HepG2 (cell line): ENCODE measurements at regions of chr4 and their contacts with region 1.

Region 1: DNA sequence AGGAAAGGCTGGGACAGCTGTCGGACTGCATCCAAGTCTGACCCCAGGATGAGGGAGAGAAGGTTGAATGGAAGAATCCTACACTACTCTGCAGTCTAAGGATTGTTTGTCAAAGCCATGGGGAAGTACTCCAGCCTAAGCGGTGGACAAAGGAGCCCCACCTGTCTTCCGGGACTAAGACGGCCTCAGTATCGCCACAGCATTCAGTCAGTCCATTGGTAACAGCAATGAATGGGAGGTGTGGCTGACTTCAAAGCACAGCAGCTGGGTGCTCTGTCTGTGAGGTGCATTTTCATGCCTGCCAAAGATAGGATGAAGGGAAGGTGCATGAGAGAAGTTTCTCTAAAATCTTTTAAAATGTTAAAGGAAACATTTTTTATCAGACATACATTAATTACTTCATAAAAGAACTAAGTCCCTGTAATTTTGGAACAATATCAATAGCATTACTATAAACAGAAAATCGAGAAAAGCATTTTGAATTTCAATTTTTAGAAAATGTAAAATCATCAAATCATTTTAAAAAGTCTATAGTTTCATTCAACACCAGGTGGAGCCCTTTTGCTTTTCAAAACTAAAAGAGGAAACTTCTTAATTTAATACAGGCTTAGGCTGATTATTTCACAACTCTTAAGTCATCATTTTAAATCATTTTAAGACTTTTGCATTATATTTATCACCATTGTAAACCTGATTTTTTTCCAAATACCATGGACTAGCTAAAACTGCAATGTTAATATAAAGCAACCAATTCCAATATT is 27.6 kb upstream of the INTU start:
- DNase-seq: peak; percentile 29
- ATAC-seq: peak; percentile 64
- H3K4me3 ChIP-seq: no peak overlapping the region
- H3K27ac ChIP-seq: no peak overlapping the region
- H3K4me1 ChIP-seq: peaks cover 6% of the 10 kb centered on the region; the same call in 1 of the 2 replicates
- H3K27me3 ChIP-seq: no peaks in the 10 kb centered on the region
- CTCF ChIP-seq: no peak; the same call in none of the 2 replicates
- EP300 ChIP-seq: no peak
- POLR2A ChIP-seq: no peak
- RAD21 ChIP-seq: no peak

Region 2: DNA sequence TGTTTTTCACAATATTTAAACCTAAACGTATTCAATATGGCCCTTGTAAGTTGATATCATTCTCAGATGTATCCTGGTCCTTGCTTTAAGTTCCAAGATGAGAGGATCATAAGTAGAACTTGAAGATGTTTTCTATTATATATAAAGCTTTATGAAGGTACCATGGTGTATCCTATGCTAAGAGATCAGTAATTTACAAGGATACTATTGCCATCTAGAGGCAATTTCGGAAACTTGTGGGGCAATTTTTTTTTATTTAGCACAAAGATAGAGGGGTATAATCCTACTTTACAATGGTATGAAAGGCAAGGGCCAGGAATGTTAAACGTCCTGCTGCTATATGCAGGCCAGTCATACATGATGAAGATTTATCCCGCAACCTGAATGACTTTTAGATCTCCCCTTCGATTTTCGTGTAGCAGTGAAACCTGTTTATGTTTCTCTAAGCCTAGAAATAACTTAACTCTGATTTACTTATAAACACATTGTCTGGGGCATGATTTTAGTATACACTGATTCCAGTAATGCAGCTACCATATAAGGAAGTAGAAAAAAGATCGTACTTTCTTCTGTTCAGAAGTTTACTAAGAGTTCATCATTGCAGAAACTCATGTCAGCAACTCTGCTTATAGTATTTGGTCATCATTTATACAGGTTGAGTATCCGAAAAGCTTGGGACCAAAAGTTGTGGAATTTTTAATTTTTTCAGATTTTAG is 127.6 kb after region 1 on chr4:
- CTCF ChIA-PET with region 1: interaction called, 43 read pairs
- POLR2A ChIA-PET with region 1: no interaction called
- in situ Hi-C with region 1: loop called (anchors 5 kb)
- intact Hi-C with region 1: loop called (anchors 1 kb)
- DNase-seq: peak; percentile 35
- ATAC-seq: peak; percentile 82
- H3K4me3 ChIP-seq: no peak overlapping the region
- H3K27ac ChIP-seq: no peak overlapping the region
- H3K4me1 ChIP-seq: no peaks in the 10 kb centered on the region
- H3K27me3 ChIP-seq: no peaks in the 10 kb centered on the region; a peak in 1 of 5 replicates
- CTCF ChIP-seq: peak; percentile 54
- EP300 ChIP-seq: no peak
- POLR2A ChIP-seq: no peak
- RAD21 ChIP-seq: no peak

Region 3: DNA sequence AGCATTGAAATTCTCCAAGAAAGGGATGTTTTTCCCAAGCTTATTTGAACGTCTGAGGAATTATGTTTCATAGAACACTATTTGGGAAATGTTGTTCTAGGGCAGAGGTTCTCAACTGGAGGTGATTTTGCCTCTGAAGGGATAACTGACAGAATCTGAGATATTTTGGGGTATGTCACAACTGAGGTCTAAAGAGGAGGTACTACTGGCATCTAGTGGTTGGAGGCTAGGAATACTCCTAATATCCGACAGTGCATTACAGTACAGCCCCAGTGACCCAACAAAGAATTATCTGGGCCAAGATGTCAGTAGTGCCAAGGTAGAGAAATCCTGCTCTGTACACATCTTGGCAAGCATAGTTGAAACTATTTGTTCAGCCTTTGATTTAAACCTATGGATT is 183.4 kb after region 1 on chr4:
- CTCF ChIA-PET with region 1: interaction called, 5 read pairs
- POLR2A ChIA-PET with region 1: no interaction called
- in situ Hi-C with region 1: no loop called
- intact Hi-C with region 1: loop called (anchors 1 kb)
- DNase-seq: peak; percentile 40
- ATAC-seq: peak; percentile 97
- H3K4me3 ChIP-seq: no peak overlapping the region
- H3K27ac ChIP-seq: no peak overlapping the region
- H3K4me1 ChIP-seq: peaks cover 17% of the 10 kb centered on the region
- H3K27me3 ChIP-seq: no peaks in the 10 kb centered on the region
- CTCF ChIP-seq: peak; percentile 71
- EP300 ChIP-seq: no peak
- POLR2A ChIP-seq: no peak
- RAD21 ChIP-seq: peak; percentile 37; the same call in 1 of the 2 replicates

Region 4: GRCh38 chr4:129046055-129046959 is 1441.2 kb after region 1 on chr4:
- CTCF ChIA-PET with region 1: no interaction called
- POLR2A ChIA-PET with region 1: no interaction called
- in situ Hi-C with region 1: no loop called
- intact Hi-C with region 1: no loop called
- DNase-seq: no peak
- ATAC-seq: no peak
- H3K4me3 ChIP-seq: no peak overlapping the region
- H3K27ac ChIP-seq: no peak overlapping the region
- H3K4me1 ChIP-seq: no peaks in the 10 kb centered on the region
- H3K27me3 ChIP-seq: no peaks in the 10 kb centered on the region
- CTCF ChIP-seq: no peak
- EP300 ChIP-seq: no peak
- POLR2A ChIP-seq: no peak
- RAD21 ChIP-seq: no peak